Prostate gland (tissue), 2 donors: ENCODE measurements at regions of chrX and their contacts with region 1.

Region 1: DNA sequence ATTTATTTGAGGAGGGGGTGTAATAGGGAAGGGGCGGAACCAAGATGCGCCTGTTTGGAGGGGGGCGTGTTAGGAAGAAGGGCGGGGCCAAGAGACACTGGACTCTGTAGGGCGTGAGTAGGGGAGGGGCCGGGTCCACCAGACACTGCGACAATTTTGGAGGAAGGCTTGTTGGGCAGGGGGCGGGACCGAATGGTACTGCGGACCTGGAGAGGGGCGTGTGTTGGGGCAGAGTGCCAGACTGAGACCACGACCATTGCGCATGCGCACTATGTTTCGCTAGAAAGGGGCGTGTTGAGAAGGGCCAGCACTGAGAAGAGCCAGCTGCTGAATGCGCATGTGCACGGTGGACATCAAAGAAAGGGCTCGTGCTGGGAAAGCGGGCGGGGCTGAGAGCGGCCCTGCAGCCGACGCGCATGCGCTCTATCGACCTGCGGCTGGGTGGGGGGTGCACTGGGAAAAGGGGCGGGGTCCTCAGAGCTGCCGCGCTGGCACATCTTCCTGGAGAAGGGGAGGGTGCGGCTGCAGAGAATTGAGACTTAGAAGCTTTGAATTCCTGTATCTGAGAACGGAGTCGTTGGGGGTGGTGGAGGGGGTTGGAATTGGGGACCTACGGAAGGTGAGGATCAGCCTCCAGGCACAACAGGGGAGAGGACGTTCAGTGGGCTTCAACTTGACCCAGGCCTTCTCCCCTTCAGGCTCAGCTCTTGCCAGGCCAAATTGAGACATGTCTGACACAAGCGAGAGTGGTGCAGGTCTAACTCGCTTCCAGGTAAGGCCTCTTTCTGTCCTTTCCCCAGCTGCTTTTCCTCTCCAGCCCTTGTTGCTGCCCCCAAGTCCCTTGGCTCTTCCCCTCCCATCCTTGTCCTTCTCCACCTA is 1.3 kb downstream of the MAGED2 start:
- DNase-seq: peak; percentile 90
- H3K4me3 ChIP-seq: peak overlapping the region; percentile 55 to 60
- H3K27ac ChIP-seq: peak overlapping the region; percentile 91 to 94
- H3K4me1 ChIP-seq: no peaks in the 10 kb centered on the region
- H3K27me3 ChIP-seq: no peaks in the 10 kb centered on the region
- CTCF ChIP-seq: no peak
- POLR2A ChIP-seq: peak; percentile 20

Region 2: GRCh38 chrX:54044126-54044876 is 764.5 kb before region 1 on chrX and contains the start of gene PHF8:
- intact Hi-C with region 1: loop called (anchors 5 kb)
- DNase-seq: peak; percentile 94
- H3K4me3 ChIP-seq: peak within 1 kb of the TSS; percentile 52 to 58
- H3K27ac ChIP-seq: peak within 1 kb of the TSS; percentile 93 to 94
- H3K4me1 ChIP-seq: no peaks in the 10 kb centered on the region
- H3K27me3 ChIP-seq: no peaks in the 10 kb centered on the region
- CTCF ChIP-seq: no peak
- POLR2A ChIP-seq: peak; percentile 18
- total RNA-seq, gene PHF8: 30.4 to 139 TPM

Region 3: DNA sequence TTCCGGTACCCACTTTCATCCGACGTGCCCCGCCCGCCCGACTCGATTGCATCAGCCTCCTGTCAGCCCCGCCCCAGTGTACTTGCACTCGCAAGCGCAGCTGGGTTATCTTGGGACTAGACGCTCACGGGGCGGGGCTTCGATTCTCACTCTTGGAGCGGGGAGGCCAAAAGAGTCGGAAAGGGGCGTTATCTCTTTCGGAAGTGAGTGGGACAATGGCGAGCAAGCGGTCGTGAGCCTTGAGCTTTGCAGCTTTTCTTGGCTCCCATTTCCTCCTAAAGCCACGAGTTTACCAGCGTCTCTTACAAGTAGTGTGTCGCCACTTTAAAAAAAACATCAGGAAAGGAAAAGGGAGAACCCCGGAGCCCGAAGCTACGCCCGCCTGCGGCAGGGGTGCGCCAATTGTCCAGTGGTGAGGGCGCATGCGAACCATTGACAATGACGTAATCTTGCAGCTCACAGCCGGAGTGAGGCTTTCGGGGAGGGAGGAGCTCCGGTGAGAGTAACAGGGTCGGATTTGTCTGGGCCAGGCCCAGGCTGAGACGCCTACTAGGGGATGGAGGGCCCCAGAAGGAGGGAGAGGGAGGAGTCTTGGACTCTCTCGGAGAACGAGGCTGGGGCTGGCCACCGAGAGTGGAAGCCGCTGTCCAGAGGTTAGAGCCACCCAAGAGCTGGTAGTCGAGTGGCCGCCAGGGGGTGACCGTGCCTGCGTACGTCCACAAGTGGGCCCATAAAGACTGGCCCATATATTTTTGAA is 169.3 kb before region 1 on chrX:
- intact Hi-C with region 1: loop called (anchors 2 kb)
- DNase-seq: peak; percentile 89
- H3K4me3 ChIP-seq: peak overlapping the region; percentile 36 to 42
- H3K27ac ChIP-seq: peak overlapping the region; percentile 86 to 89
- H3K4me1 ChIP-seq: no peaks in the 10 kb centered on the region
- H3K27me3 ChIP-seq: no peaks in the 10 kb centered on the region
- CTCF ChIP-seq: peak in 3 of 4 experiments; percentile 40 to 68 (median 62)
- POLR2A ChIP-seq: peak; percentile 45

Region 4: GRCh38 chrX:54999717-55000598 is 191.1 kb after region 1 on chrX and contains the start of gene APEX2:
- intact Hi-C with region 1: loop called (anchors 5 kb)
- DNase-seq: peak; percentile 87
- H3K4me3 ChIP-seq: peak within 1 kb of the TSS; percentile 42 to 45
- H3K27ac ChIP-seq: peak within 1 kb of the TSS; percentile 85 to 86
- H3K4me1 ChIP-seq: no peaks in the 10 kb centered on the region
- H3K27me3 ChIP-seq: no peaks in the 10 kb centered on the region
- CTCF ChIP-seq: no peak
- POLR2A ChIP-seq: peak; percentile 71
- total RNA-seq, gene APEX2: 17.4 to 18.3 TPM